ENCODE measurements at regions of chr13 and their contacts with region 1.

Region 1: GRCh38 chr13:106536244-106537034 is 977 bp upstream of the EFNB2 start:
- DNase-seq: peak; percentile 84
- H3K4me3 Mint-ChIP-seq: peak overlapping the region; percentile 95
- H3K27ac Mint-ChIP-seq: peak overlapping the region; percentile 46
- H3K4me1 Mint-ChIP-seq: no peaks in the 10 kb centered on the region
- H3K27me3 Mint-ChIP-seq: no peaks in the 10 kb centered on the region
- CTCF ChIP-seq: peak; percentile 91

Region 2: GRCh38 chr13:104571161-104571892 is 1965.1 kb before region 1 on chr13:
- CTCF ChIA-PET with region 1: interaction called, 43 read pairs
- POLR2A ChIA-PET with region 1: interaction called, 33 read pairs
- intact Hi-C with region 1: loop called (anchors 1 kb)
- DNase-seq: peak; percentile 80
- H3K4me3 Mint-ChIP-seq: peak overlapping the region; percentile 62
- H3K27ac Mint-ChIP-seq: peak overlapping the region; percentile 28
- H3K4me1 Mint-ChIP-seq: peaks cover 11% of the 10 kb centered on the region
- H3K27me3 Mint-ChIP-seq: no peaks in the 10 kb centered on the region
- CTCF ChIP-seq: peak; percentile 74

Region 3: GRCh38 chr13:105442941-105443340 is 1093.5 kb before region 1 on chr13:
- CTCF ChIA-PET with region 1: interaction called, 3 read pairs
- POLR2A ChIA-PET with region 1: no interaction called
- intact Hi-C with region 1: loop called (anchors 10 kb)
- DNase-seq: peak; percentile 93
- H3K4me3 Mint-ChIP-seq: no peak overlapping the region
- H3K27ac Mint-ChIP-seq: peak overlapping the region; percentile 95
- H3K4me1 Mint-ChIP-seq: peaks cover 21% of the 10 kb centered on the region
- H3K27me3 Mint-ChIP-seq: no peaks in the 10 kb centered on the region
- CTCF ChIP-seq: no peak

Region 4: GRCh38 chr13:105937451-105937850 is 599.0 kb before region 1 on chr13:
- CTCF ChIA-PET with region 1: no interaction called
- POLR2A ChIA-PET with region 1: no interaction called
- intact Hi-C with region 1: no loop called
- DNase-seq: no peak
- H3K4me3 Mint-ChIP-seq: no peak overlapping the region
- H3K27ac Mint-ChIP-seq: peak overlapping the region; percentile 55
- H3K4me1 Mint-ChIP-seq: peaks cover 7% of the 10 kb centered on the region
- H3K27me3 Mint-ChIP-seq: no peaks in the 10 kb centered on the region
- CTCF ChIP-seq: no peak

Region 5: DNA sequence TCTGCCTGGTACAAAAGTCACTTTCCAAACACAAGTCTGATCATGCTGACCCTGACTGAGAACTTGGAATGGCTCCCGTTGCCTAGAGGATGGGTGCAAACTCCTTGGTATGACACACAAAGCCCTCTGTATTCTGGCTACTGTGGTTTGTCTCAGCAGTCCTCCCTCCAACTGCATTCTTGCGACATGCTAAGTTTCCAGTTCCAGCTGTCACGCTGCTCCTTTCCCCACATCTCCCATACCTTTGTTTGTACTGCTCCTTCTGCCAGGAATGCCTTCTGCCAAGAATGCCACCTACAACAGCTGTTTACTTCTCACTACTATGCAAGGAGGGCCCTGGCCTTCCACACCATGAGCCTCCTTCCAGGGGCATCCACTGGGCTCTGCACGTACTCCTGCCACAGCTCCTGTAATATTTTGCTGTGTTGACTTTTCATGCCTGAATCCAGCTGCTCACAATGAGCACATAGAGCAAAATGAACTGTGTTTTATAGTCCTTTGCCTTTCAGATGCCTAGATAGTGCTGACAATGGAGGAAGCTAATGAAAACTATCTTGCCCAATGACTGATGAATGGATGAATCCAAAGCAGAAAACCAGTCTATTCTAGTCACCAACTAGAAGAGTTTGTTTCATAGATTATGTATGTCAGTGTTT is 544.7 kb before region 1 on chr13:
- CTCF ChIA-PET with region 1: interaction called, 5 read pairs
- POLR2A ChIA-PET with region 1: interaction called, 20 read pairs
- intact Hi-C with region 1: loop called (anchors 2 kb)
- DNase-seq: peak; percentile 99
- H3K4me3 Mint-ChIP-seq: peak overlapping the region; percentile 49
- H3K27ac Mint-ChIP-seq: peak overlapping the region; percentile 100
- H3K4me1 Mint-ChIP-seq: peaks cover 35% of the 10 kb centered on the region
- H3K27me3 Mint-ChIP-seq: no peaks in the 10 kb centered on the region
- CTCF ChIP-seq: no peak

Region 6: DNA sequence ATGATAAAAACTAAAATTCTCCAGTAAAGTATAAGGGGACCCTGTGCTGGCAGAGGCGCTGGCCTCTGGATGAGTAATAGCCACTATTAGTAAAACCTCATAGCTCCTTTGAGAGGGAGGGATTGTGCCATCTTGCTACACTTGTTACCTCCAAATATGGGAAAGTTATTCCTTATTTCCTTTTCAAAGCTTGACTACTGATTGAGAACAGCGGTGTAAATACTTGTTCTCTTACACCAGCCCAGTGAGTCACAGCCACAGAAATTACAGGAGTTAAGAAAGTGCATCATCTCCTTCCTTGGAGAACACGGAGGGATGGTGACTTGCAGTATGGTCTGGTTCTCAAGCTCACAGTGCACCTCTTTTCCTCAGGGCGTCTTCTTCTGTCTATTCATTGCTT is 380.0 kb before region 1 on chr13:
- CTCF ChIA-PET with region 1: interaction called, 3 read pairs
- POLR2A ChIA-PET with region 1: interaction called, 10 read pairs
- intact Hi-C with region 1: loop called (anchors 5 kb)
- DNase-seq: peak; percentile 97
- H3K4me3 Mint-ChIP-seq: peak overlapping the region; percentile 4
- H3K27ac Mint-ChIP-seq: peak overlapping the region; percentile 86
- H3K4me1 Mint-ChIP-seq: peaks cover 43% of the 10 kb centered on the region
- H3K27me3 Mint-ChIP-seq: no peaks in the 10 kb centered on the region
- CTCF ChIP-seq: no peak

Region 7: GRCh38 chr13:106520205-106521054 is 16.0 kb before region 1 on chr13:
- CTCF ChIA-PET with region 1: interaction called, 7 read pairs
- POLR2A ChIA-PET with region 1: interaction called, 26 read pairs
- intact Hi-C with region 1: no loop called
- DNase-seq: no peak
- H3K4me3 Mint-ChIP-seq: no peak overlapping the region
- H3K27ac Mint-ChIP-seq: peak overlapping the region; percentile 22
- H3K4me1 Mint-ChIP-seq: peaks cover 44% of the 10 kb centered on the region
- H3K27me3 Mint-ChIP-seq: no peaks in the 10 kb centered on the region
- CTCF ChIP-seq: peak; percentile 31

Region 8: DNA sequence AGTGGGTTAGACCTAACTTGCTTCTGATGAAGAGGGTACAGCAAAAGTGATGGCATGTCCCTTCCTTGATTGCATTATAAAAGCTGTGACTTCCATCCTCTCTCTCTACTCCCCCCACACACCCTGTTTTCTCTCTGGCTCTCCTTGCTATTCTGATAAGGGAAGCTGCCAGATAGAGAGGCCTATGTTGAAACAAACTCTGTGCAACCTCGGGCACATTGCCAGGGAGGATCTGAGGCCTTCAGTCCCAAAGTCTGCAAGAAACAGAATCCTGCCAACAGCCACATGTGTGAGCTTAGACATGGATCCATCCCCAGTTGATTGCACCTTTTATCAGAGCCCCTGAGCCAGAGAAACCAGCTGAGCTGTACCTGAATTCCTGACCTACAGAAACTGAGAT is 76.2 kb after region 1 on chr13:
- CTCF ChIA-PET with region 1: no interaction called
- POLR2A ChIA-PET with region 1: no interaction called
- intact Hi-C with region 1: no loop called
- DNase-seq: peak; percentile 61
- H3K4me3 Mint-ChIP-seq: no peak overlapping the region
- H3K27ac Mint-ChIP-seq: no peak overlapping the region
- H3K4me1 Mint-ChIP-seq: peaks cover 16% of the 10 kb centered on the region
- H3K27me3 Mint-ChIP-seq: no peaks in the 10 kb centered on the region
- CTCF ChIP-seq: no peak

Region 9: GRCh38 chr13:107124129-107124718 is 587.8 kb after region 1 on chr13:
- CTCF ChIA-PET with region 1: interaction called, 5 read pairs
- POLR2A ChIA-PET with region 1: interaction called, 3 read pairs
- intact Hi-C with region 1: loop called (anchors 2 kb)
- DNase-seq: peak; percentile 45
- H3K4me3 Mint-ChIP-seq: no peak overlapping the region
- H3K27ac Mint-ChIP-seq: no peak overlapping the region
- H3K4me1 Mint-ChIP-seq: peaks cover 6% of the 10 kb centered on the region
- H3K27me3 Mint-ChIP-seq: no peaks in the 10 kb centered on the region
- CTCF ChIP-seq: peak; percentile 58

Measured in MCF 10A (cell line).